ENCODE measurements at regions of chrX and their contacts with region 1.

Region 1: GRCh38 chrX:103823591-103823990 is 8.5 kb downstream of the RAB9B start:
- DNase-seq: no peak
- H3K4me3 ChIP-seq: no peak overlapping the region
- H3K4me3 Mint-ChIP-seq: no peak overlapping the region
- H3K27ac ChIP-seq: no peak overlapping the region
- H3K27ac Mint-ChIP-seq: no peak overlapping the region
- H3K4me1 ChIP-seq: peaks cover 0 to 3% of the 10 kb centered on the region in 2 donors
- H3K4me1 Mint-ChIP-seq: peaks cover 6% of the 10 kb centered on the region
- H3K27me3 ChIP-seq: no peaks in the 10 kb centered on the region
- H3K27me3 Mint-ChIP-seq: peaks cover 0 to 4% (median 0%) of the 10 kb centered on the region in 3 donors
- CTCF ChIP-seq: no peak

Region 2: GRCh38 chrX:103533511-103534216 is 289.9 kb before region 1 on chrX:
- intact Hi-C with region 1: loop called (anchors 5 kb)
- DNase-seq: peak; percentile 46 to 53 (median 50)
- H3K4me3 ChIP-seq: peak overlapping the region; percentile 20 to 48 (median 25)
- H3K4me3 Mint-ChIP-seq: peak overlapping the region; percentile 52 to 82
- H3K27ac ChIP-seq: no peak overlapping the region
- H3K27ac Mint-ChIP-seq: no peak overlapping the region
- H3K4me1 ChIP-seq: peaks cover 3% of the 10 kb centered on the region in 2 donors
- H3K4me1 Mint-ChIP-seq: peaks cover 4% of the 10 kb centered on the region
- H3K27me3 ChIP-seq: no peaks in the 10 kb centered on the region
- H3K27me3 Mint-ChIP-seq: peaks cover 0 to 3% (median 0%) of the 10 kb centered on the region in 3 donors
- CTCF ChIP-seq: peak; percentile 72

Region 3: DNA sequence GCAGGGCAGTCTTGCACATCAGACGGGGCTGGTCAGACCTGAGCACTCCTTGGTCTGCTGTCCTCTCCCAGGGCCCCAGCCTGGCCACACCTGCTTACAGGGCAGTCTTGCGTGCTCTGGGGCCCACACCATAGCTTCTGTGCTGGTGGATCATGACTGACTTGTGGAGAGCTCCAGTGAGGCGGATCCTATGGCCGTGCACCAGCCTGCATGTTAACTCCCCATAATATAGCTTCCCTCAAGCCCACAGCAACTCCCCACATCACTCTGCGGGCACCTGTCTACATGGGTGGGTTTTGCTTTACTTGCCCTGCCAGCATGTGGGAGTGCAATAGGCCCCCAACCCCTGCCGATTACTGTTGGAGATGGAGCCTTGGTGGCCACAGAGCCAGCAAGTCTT is 130.7 kb after region 1 on chrX:
- intact Hi-C with region 1: no loop called
- DNase-seq: no peak
- H3K4me3 ChIP-seq: no peak overlapping the region
- H3K4me3 Mint-ChIP-seq: no peak overlapping the region
- H3K27ac ChIP-seq: no peak overlapping the region
- H3K27ac Mint-ChIP-seq: peak overlapping the region in 1 of 7 donors; percentile 35
- H3K4me1 ChIP-seq: no peaks in the 10 kb centered on the region
- H3K4me1 Mint-ChIP-seq: no peaks in the 10 kb centered on the region
- H3K27me3 ChIP-seq: no peaks in the 10 kb centered on the region
- H3K27me3 Mint-ChIP-seq: peaks cover 1 to 3% (median 3%) of the 10 kb centered on the region in 3 donors
- CTCF ChIP-seq: no peak